ENCODE measurements at regions of chr11 and their contacts with region 1.

Region 1: GRCh38 chr11:112942966-112943643 is 18.1 kb upstream of the NCAM1 start:
- DNase-seq: no peak
- H3K4me3 ChIP-seq: no peak overlapping the region
- H3K27ac ChIP-seq: peak overlapping the region; percentile 30 to 66 (median 45)
- H3K4me1 ChIP-seq: peaks cover 0 to 19% (median 16%) of the 10 kb centered on the region in 4 donors
- H3K27me3 ChIP-seq: no peaks in the 10 kb centered on the region
- CTCF ChIP-seq: no peak
- EP300 ChIP-seq: peak in 2 of 4 donors; percentile 8 to 11
- POLR2A ChIP-seq: no peak

Region 2: DNA sequence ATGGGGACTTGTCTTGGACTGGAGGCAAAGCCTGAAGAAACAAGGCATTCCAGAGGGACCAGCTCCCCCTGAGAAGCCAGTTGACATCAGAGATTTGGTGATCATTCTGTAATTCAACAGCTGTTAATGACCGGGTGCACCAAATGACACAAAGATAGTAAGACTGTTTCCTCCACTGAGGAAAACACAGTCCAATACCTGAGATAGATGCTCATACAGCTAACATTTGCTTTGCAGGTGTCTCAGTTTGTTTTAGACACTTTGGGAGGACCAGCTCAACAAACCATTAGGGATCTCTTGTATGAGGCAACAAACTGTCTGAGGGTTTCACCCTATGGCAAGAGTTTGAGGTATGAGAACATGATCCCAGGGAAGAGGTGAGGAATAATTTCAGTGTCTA is 445.3 kb before region 1 on chr11:
- intact Hi-C with region 1: no loop called
- DNase-seq: no peak
- H3K4me3 ChIP-seq: no peak overlapping the region
- H3K27ac ChIP-seq: no peak overlapping the region
- H3K4me1 ChIP-seq: no peaks in the 10 kb centered on the region
- H3K27me3 ChIP-seq: no peaks in the 10 kb centered on the region
- CTCF ChIP-seq: no peak
- EP300 ChIP-seq: no peak
- POLR2A ChIP-seq: no peak

Region 3: GRCh38 chr11:112834277-112834755 is 108.8 kb before region 1 on chr11:
- intact Hi-C with region 1: loop called (anchors 5 kb)
- DNase-seq: peak; percentile 93
- H3K4me3 ChIP-seq: no peak overlapping the region
- H3K27ac ChIP-seq: peak overlapping the region in 1 of 4 donors; percentile 1
- H3K4me1 ChIP-seq: peaks cover 0 to 15% (median 8%) of the 10 kb centered on the region in 4 donors
- H3K27me3 ChIP-seq: no peaks in the 10 kb centered on the region
- CTCF ChIP-seq: no peak
- EP300 ChIP-seq: no peak
- POLR2A ChIP-seq: no peak

Region 4: DNA sequence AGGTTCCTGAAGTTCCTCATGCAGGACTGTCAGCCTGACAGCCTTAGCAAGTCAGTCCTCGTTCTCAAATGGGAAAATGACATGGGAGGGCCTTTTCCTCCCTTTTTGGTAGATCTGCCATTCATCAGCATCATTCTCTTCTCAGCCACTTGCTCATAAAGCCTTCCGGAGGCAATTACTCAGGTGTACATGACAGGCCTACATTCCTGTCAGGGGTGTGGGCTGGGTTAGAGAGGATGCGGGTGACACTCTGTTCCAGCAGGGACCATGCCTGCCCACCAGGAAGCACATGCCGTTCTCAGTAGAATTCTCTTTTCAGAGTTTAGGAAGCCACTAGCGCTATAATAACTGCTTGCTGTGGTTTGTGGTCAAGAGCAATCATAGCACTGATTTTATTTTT is 420.3 kb after region 1 on chr11:
- intact Hi-C with region 1: no loop called
- DNase-seq: no peak
- H3K4me3 ChIP-seq: no peak overlapping the region
- H3K27ac ChIP-seq: no peak overlapping the region
- H3K4me1 ChIP-seq: no peaks in the 10 kb centered on the region
- H3K27me3 ChIP-seq: no peaks in the 10 kb centered on the region
- CTCF ChIP-seq: no peak
- EP300 ChIP-seq: no peak
- POLR2A ChIP-seq: no peak

Measured in sigmoid colon (tissue), 7 donors.